Sigmoid colon (tissue), 7 donors: ENCODE measurements at regions of chr18 and their contacts with region 1.

Region 1: DNA sequence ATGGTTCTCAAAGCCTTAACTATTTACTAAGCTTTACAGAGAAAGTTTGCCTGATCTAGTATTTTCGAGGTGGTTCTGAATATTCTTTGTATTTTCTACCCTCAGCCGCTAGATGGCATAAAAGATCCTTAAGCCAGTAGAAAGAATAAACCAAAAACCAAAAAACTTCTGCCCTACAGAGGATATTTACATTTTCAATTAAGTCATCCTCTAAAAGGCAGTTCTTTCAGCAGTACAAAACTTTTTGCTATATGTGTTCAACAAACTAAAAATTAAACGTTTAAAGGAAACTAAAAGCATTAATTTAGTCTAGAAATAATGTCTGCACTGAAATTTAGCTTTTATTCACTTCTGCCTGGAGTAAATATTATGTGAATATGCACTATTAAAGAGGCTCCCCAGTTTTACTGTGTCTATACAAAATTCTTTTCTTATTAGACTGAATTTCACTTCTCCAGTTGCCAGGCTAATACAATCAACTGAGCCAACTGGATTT is 297.5 kb downstream of the PIEZO2 start:
- DNase-seq: no peak
- H3K4me3 ChIP-seq: no peak overlapping the region
- H3K27ac ChIP-seq: no peak overlapping the region
- H3K4me1 ChIP-seq: peaks cover 0 to 6% (median 0%) of the 10 kb centered on the region in 4 donors
- H3K27me3 ChIP-seq: no peaks in the 10 kb centered on the region
- CTCF ChIP-seq: peak in 3 of 4 experiments; percentile 58 to 78 (median 60)
- EP300 ChIP-seq: no peak
- POLR2A ChIP-seq: no peak

Region 2: DNA sequence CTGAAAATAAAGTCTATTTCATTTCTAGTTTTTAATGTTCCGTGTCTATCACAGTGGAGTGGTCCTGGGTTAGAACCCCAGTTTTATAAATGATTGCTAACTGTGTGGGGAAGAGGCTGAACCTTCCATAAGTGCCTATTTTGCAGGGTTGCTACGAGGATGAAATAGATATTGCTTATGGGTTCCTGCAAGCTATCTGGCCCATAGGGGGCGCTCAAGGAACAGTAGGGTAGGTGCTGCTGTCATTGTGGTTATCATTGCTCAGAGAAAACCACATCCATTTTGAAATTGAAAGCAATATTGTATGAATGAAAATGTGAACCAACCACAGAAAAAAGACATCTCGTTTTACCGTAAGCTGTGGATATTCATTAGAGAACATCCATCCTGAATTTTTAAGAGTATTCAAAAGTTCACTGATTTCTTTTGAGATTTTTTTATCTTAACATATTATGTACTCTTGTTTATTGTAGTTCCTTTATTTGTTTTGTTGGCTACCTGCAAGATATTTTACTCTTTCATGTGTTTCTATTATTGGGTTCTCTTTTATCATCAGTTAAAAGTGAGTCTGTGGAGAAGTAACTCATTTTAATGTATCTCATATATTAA is 64.5 kb before region 1 on chr18:
- intact Hi-C with region 1: no loop called
- DNase-seq: peak; percentile 81
- H3K4me3 ChIP-seq: no peak overlapping the region
- H3K27ac ChIP-seq: no peak overlapping the region
- H3K4me1 ChIP-seq: no peaks in the 10 kb centered on the region
- H3K27me3 ChIP-seq: peaks cover 0 to 3% (median 0%) of the 10 kb centered on the region in 3 donors
- CTCF ChIP-seq: peak in 3 of 4 experiments; percentile 18 to 37 (median 36)
- EP300 ChIP-seq: no peak
- POLR2A ChIP-seq: no peak

Region 3: GRCh38 chr18:11040823-11041656 is 189.2 kb after region 1 on chr18:
- intact Hi-C with region 1: loop called (anchors 5 kb)
- DNase-seq: no peak
- H3K4me3 ChIP-seq: no peak overlapping the region
- H3K27ac ChIP-seq: no peak overlapping the region
- H3K4me1 ChIP-seq: no peaks in the 10 kb centered on the region
- H3K27me3 ChIP-seq: no peaks in the 10 kb centered on the region
- CTCF ChIP-seq: peak; percentile 34 to 77 (median 69)
- EP300 ChIP-seq: no peak
- POLR2A ChIP-seq: no peak

Region 4: GRCh38 chr18:11149441-11150270 is 297.8 kb after region 1 on chr18 and contains the start of gene PIEZO2:
- intact Hi-C with region 1: loop called (anchors 5 kb)
- DNase-seq: peak; percentile 84
- H3K4me3 ChIP-seq: peak within 1 kb of the TSS; percentile 27 to 53 (median 44)
- H3K27ac ChIP-seq: peak within 1 kb of the TSS in 3 of 4 donors; percentile 41 to 60 (median 56)
- H3K4me1 ChIP-seq: peaks cover 0 to 21% (median 15%) of the 10 kb centered on the region in 4 donors
- H3K27me3 ChIP-seq: peaks cover 8 to 41% (median 28%) of the 10 kb centered on the region in 3 donors
- CTCF ChIP-seq: no peak
- EP300 ChIP-seq: no peak
- POLR2A ChIP-seq: no peak
- total RNA-seq, gene PIEZO2: 24.3 to 35.2 (median 26.9) TPM

Region 5: DNA sequence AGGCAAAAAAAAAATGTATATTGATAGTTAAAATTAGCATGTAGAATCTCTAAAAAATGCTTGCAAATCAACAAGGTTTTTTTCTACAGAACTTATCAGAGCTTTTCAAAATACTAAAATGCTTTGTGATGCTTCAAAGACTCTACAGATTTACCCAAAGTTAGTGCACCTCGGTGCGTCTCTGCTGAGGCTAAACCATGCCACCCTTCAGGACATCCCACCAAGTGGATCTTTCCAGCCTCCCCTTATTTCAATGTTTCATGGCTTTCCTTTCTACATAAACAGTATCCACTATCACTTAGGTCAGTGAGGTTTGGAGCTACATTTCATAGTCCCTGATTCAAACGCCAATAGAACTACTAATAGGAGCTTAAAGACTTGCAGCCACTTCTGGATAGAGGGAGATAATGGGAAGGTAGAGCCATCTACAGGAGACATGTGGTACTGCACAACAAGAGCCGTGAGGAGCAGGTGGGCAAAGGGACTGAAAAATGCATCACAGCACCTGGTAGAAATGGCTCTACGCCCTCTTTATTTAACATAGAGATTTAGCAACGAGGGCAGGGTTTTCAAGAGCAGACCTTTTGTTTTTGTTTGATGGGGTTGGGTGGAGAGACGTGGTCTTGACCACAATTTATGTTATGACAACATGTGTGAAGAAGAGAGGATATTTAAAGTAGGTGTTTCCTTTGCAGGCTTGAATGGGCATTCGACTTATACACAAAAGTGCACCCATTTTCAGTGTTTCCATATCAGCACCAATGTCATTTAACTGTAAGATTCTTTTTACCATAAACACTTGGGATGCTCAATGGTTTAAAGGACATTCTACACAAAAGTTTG is 701.4 kb after region 1 on chr18:
- intact Hi-C with region 1: loop called (anchors 5 kb)
- DNase-seq: no peak
- H3K4me3 ChIP-seq: no peak overlapping the region
- H3K27ac ChIP-seq: no peak overlapping the region
- H3K4me1 ChIP-seq: no peaks in the 10 kb centered on the region
- H3K27me3 ChIP-seq: no peaks in the 10 kb centered on the region
- CTCF ChIP-seq: peak; percentile 64 to 83 (median 74)
- EP300 ChIP-seq: no peak
- POLR2A ChIP-seq: no peak